GM10248 (cell line): ENCODE measurements at regions of chr14 and their contacts with region 1.

Region 1: GRCh38 chr14:101774006-101774795 is 12.7 kb downstream of the PPP2R5C start:
- DNase-seq: no peak
- CTCF ChIP-seq: no peak

Region 2: GRCh38 chr14:101716956-101717662 is 57.1 kb before region 1 on chr14:
- CTCF ChIA-PET with region 1: no interaction called
- POLR2A ChIA-PET with region 1: no interaction called
- DNase-seq: no peak
- CTCF ChIP-seq: no peak

Region 3: DNA sequence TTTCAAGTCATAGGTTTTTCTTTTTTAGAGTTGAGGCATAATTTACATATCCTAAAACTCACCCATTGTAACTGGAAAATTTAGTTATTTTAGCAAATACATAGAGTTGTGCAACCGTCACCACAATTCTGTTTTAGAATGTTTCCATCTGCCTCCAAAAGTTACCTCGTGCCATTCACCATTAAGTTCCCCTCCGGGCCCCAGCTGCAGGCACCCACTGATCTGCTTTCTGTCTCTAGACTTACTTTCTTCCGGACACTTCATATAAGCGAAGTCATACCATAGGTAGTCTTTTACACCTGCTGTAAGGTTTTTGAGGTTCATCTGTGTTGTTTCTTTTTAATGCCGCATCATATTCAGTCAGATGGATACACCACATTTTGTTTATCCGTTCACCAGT is 16.0 kb after region 1 on chr14:
- CTCF ChIA-PET with region 1: interaction called, 12 read pairs
- POLR2A ChIA-PET with region 1: no interaction called
- DNase-seq: no peak
- CTCF ChIP-seq: no peak

Region 4: GRCh38 chr14:101836135-101836534 is 61.9 kb after region 1 on chr14:
- CTCF ChIA-PET with region 1: interaction called, 14 read pairs
- POLR2A ChIA-PET with region 1: no interaction called
- DNase-seq: no peak
- CTCF ChIP-seq: no peak

Region 5: GRCh38 chr14:101899263-101899662 is 125.1 kb after region 1 on chr14:
- CTCF ChIA-PET with region 1: interaction called, 11 read pairs
- POLR2A ChIA-PET with region 1: no interaction called
- DNase-seq: no peak
- CTCF ChIP-seq: no peak

Region 6: GRCh38 chr14:101932673-101933072 is 158.5 kb after region 1 on chr14:
- CTCF ChIA-PET with region 1: interaction called, 10 read pairs
- POLR2A ChIA-PET with region 1: no interaction called
- DNase-seq: no peak
- CTCF ChIP-seq: no peak

Region 7: GRCh38 chr14:101992708-101993107 is 218.5 kb after region 1 on chr14:
- CTCF ChIA-PET with region 1: interaction called, 10 read pairs
- POLR2A ChIA-PET with region 1: no interaction called
- DNase-seq: peak; percentile 72
- CTCF ChIP-seq: peak; percentile 50